Panc1 (cell line): ENCODE measurements at regions of chr5 and their contacts with region 1.

Region 1: GRCh38 chr5:75681125-75681830 is 36.0 kb downstream of the POC5 start:
- DNase-seq: peak; percentile 17
- ATAC-seq: 0 out of 2 replicates have a peak, but pooled peaks have one; percentile 66
- H3K4me3 ChIP-seq: no peak overlapping the region
- H3K27ac ChIP-seq: no peak overlapping the region
- H3K4me1 ChIP-seq: no peaks in the 10 kb centered on the region; the same call in 1 of the 2 replicates
- H3K27me3 ChIP-seq: no peaks in the 10 kb centered on the region
- CTCF ChIP-seq: peak; percentile 47; the same call in 1 of the 2 replicates

Region 2: DNA sequence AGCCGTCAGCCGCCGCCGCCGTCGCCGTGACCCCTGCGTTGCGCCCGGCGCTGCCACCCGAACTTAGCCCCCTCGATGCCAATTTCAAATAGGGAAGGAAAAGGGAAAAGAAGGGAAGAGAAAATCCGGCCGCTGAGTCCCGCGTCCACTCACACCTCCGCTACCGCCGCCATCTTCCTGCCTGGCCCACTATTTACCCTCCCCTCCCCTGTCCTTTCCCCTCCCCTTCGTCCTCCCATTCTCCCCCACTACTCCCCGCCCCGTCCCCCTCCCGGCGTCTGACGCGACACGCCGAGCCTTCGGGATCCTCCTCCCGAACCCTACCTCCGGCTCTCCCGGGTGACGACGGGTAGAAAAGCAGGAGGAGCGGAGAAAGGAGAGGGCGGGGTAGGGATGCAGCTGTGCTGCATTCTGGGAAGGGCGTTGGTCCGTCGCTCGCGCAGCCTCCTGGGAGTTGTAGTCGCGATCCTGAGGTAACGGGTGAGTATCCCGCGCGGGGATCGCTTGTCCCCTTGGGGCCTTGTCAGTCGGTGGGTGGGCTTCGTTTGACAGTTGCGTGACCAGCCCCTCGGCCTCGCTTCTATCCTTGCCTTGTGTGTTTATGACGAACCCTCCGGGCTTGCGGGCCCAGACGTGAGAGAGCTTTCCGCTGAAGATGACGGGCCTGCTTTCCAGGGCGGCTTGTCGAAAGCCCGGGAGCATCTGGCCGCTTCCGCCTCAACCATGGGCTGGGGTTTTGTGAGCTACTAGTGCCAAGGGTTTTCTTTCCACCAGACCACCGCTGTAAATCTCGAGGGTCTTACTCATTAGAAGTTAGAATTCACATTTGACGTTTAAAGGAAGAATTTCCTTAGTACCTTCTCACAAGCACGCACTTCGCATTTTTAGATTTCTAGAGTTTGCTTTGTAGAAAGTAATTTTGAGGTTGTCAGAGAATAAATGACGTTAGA is 169.6 kb before region 1 on chr5 and contains the starts of genes CERT1 and POLK:
- CTCF ChIA-PET with region 1: no interaction called
- POLR2A ChIA-PET with region 1: interaction called, 12 read pairs
- in situ Hi-C with region 1: no loop called
- intact Hi-C with region 1: no loop called
- DNase-seq: peak; percentile 97
- ATAC-seq: peak; percentile 99
- H3K4me3 ChIP-seq: peak within 1 kb of the TSS; percentile 87 to 98
- H3K27ac ChIP-seq: peak within 1 kb of the TSS; percentile 98
- H3K4me1 ChIP-seq: peaks cover 9% of the 10 kb centered on the region
- H3K27me3 ChIP-seq: no peaks in the 10 kb centered on the region
- CTCF ChIP-seq: no peak
- total RNA-seq, gene CERT1: 26.7 TPM
- total RNA-seq, gene POLK: 21.3 TPM

Region 3: GRCh38 chr5:75584641-75585040 is 96.6 kb before region 1 on chr5:
- CTCF ChIA-PET with region 1: no interaction called
- POLR2A ChIA-PET with region 1: no interaction called
- in situ Hi-C with region 1: no loop called
- intact Hi-C with region 1: loop called (anchors 5 kb)
- DNase-seq: no peak
- ATAC-seq: no peak
- H3K4me3 ChIP-seq: no peak overlapping the region
- H3K27ac ChIP-seq: no peak overlapping the region
- H3K4me1 ChIP-seq: no peaks in the 10 kb centered on the region
- H3K27me3 ChIP-seq: no peaks in the 10 kb centered on the region
- CTCF ChIP-seq: peak; percentile 35; the same call in 1 of the 2 replicates

Region 4: DNA sequence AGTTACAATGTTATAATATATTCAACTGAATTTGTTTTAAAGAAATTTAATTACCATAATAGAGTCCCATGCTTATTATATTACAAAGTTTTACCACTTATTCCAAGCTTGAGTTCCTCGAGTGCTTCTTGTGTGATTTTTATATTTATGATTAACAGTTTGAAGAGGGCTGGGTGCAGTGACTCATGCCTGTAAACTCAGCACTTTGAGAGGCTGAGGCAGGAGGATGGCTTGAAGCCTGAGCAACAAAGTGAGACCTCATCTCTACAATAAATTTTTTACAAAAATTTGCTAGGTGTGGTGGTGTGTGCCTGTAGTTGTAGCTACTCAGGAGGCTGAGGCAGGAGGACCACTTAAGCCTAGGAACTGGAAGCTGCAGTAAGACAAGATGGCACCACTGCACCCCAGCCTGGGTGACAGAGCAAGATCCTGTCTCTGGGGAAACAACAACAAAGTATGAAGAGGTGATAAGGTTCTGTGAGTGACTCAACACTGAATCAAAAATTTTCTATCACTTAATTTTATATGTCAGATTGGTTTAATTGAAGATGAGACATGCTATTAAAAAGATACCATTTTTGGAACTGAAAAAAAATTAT is 26.7 kb after region 1 on chr5:
- CTCF ChIA-PET with region 1: no interaction called
- POLR2A ChIA-PET with region 1: no interaction called
- in situ Hi-C with region 1: no loop called
- intact Hi-C with region 1: no loop called
- DNase-seq: no peak
- ATAC-seq: peak; percentile 60; the same call in 1 of the 2 replicates
- H3K4me3 ChIP-seq: no peak overlapping the region
- H3K27ac ChIP-seq: no peak overlapping the region
- H3K4me1 ChIP-seq: no peaks in the 10 kb centered on the region; the same call in 1 of the 2 replicates
- H3K27me3 ChIP-seq: no peaks in the 10 kb centered on the region
- CTCF ChIP-seq: no peak